Panc1 (cell line): ENCODE measurements at regions of chr11 and their contacts with region 1.

Region 1: GRCh38 chr11:44565211-44565952 is at the start of gene CD82:
- DNase-seq: peak; percentile 69
- ATAC-seq: peak; percentile 97
- H3K4me3 ChIP-seq: peak within 1 kb of the TSS; percentile 63 to 85
- H3K27ac ChIP-seq: peak within 1 kb of the TSS; percentile 85
- H3K4me1 ChIP-seq: peaks cover 16% of the 10 kb centered on the region
- H3K27me3 ChIP-seq: no peaks in the 10 kb centered on the region
- CTCF ChIP-seq: no peak
- total RNA-seq, gene CD82: 26.1 TPM

Region 2: DNA sequence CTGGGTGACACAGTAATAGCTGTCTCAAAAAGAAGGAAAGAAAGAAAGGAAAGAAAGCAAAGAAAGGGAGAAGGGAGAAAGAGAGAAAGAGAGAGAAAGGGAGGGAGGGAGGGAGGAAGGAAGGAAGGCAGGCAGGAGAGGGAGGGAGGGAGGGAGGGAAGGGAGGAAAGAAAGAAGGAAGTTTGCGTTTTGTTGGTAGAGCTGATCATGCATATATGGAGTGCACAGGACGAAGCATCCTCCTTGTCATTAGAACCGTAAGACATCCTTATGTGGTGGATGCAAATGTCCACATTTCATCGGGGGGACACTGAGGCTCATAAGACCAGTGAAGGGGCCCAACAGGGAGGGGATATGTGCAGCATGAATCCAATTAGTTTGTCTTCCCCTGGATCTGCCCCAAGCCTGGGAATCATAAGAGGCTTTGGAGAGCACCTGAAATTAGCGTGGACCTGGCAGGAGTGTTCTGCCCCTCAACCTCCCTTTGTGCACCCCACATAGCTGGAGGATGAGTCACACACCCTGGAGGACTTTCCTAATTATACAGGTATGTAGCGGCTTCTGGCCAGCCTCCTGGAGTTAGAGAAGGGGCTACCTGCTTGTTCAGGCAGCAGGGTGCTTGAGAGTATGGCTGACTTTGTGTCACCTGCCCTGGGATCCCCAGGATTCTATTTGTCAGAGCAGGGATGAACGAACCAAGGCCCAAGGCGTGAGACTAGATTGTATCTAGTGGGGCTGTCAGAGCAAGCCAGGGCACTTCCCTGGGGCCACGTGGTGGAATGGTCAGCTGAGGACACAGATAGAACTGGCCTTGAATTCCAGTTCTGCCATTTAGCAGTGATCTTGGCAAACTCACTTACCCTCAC is 119.6 kb before region 1 on chr11:
- CTCF ChIA-PET with region 1: no interaction called
- POLR2A ChIA-PET with region 1: no interaction called
- in situ Hi-C with region 1: no loop called
- intact Hi-C with region 1: no loop called
- DNase-seq: no peak
- ATAC-seq: peak; percentile 64
- H3K4me3 ChIP-seq: no peak overlapping the region
- H3K27ac ChIP-seq: no peak overlapping the region
- H3K4me1 ChIP-seq: peaks cover 4% of the 10 kb centered on the region; the same call in 1 of the 2 replicates
- H3K27me3 ChIP-seq: no peaks in the 10 kb centered on the region
- CTCF ChIP-seq: no peak

Region 3: DNA sequence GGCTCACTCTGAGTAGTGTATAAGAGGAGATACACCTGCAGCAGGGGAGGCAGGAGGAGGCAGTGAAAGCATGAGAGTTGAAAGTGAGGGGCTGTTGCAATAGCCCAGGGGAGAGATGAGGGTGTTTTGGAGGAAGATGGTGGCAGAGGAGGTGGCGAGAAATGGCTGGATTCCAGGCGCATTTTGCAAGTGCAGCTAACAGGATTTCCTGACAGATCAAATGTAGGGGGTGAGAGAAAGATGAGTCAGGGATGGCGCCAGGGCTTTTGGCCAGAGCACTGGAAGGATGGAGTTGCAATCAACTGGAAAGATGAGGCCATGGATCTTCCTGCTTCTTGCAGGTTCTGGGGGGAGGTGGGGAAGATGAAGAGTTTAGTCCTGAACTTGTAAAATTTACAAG is 144.6 kb after region 1 on chr11:
- CTCF ChIA-PET with region 1: no interaction called
- POLR2A ChIA-PET with region 1: no interaction called
- in situ Hi-C with region 1: no loop called
- intact Hi-C with region 1: loop called (anchors 10 kb)
- DNase-seq: no peak
- ATAC-seq: no peak
- H3K4me3 ChIP-seq: no peak overlapping the region
- H3K27ac ChIP-seq: no peak overlapping the region
- H3K4me1 ChIP-seq: no peaks in the 10 kb centered on the region
- H3K27me3 ChIP-seq: peaks cover 2% of the 10 kb centered on the region; the same call in 1 of the 2 replicates
- CTCF ChIP-seq: no peak

Region 4: GRCh38 chr11:44899959-44900358 is 334.6 kb after region 1 on chr11:
- CTCF ChIA-PET with region 1: no interaction called
- POLR2A ChIA-PET with region 1: no interaction called
- in situ Hi-C with region 1: no loop called
- intact Hi-C with region 1: loop called (anchors 10 kb)
- DNase-seq: no peak
- ATAC-seq: peak; percentile 54; the same call in 1 of the 2 replicates
- H3K4me3 ChIP-seq: no peak overlapping the region
- H3K27ac ChIP-seq: no peak overlapping the region
- H3K4me1 ChIP-seq: no peaks in the 10 kb centered on the region
- H3K27me3 ChIP-seq: no peaks in the 10 kb centered on the region
- CTCF ChIP-seq: no peak

Region 5: GRCh38 chr11:45339729-45340519 is 774.5 kb after region 1 on chr11:
- CTCF ChIA-PET with region 1: no interaction called
- POLR2A ChIA-PET with region 1: no interaction called
- in situ Hi-C with region 1: no loop called
- intact Hi-C with region 1: no loop called
- DNase-seq: peak; percentile 50
- ATAC-seq: peak; percentile 98
- H3K4me3 ChIP-seq: peak overlapping the region; percentile 4 to 35; a peak in 3 of 4 replicates
- H3K27ac ChIP-seq: no peak overlapping the region
- H3K4me1 ChIP-seq: no peaks in the 10 kb centered on the region
- H3K27me3 ChIP-seq: peaks cover 12% of the 10 kb centered on the region; the same call in 1 of the 2 replicates
- CTCF ChIP-seq: peak; percentile 95